ENCODE measurements at regions of chr6 and their contacts with region 1.

Region 1: GRCh38 chr6:165439928-165440554 is 130.6 kb upstream of the C6orf118 start:
- DNase-seq: no peak
- ATAC-seq: peak in 1 of 2 donors; percentile 38

Region 2: GRCh38 chr6:165729307-165729936 is 289.4 kb after region 1 on chr6:
- intact Hi-C with region 1: loop called in 1 of 2 experiments (anchors 10 kb)
- DNase-seq: no peak
- ATAC-seq: peak in 1 of 2 donors; percentile 43

Region 3: DNA sequence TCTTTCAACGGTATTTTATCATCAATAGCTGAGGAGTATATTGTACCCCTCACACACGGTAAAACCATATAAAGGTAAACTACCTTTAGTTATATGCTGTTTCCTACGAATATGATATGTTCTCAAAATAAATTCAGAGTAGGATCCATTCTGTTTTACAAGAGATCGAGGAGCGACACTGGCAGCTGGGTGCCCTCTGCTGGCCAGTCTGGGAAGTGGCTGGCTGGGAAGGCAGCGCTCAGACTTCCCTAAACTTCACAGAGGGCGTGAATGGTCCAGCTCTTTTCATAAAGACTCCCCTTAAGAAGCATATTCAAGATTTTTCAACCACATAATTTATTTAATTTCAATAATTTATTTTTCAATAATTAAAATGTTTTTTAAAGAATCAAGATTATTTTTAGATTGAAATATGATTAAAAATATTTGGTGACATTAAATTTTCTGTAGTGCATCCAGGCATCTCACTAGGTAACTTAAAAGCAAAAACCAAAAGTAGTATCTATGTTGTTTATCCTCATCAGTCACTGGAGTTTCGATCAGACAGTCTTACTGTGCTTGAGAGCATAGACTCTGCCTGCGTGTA is 410.5 kb after region 1 on chr6:
- intact Hi-C with region 1: loop called (anchors 2 to 5 kb)
- DNase-seq: peak; percentile 73
- ATAC-seq: peak; percentile 70 to 71

Region 4: GRCh38 chr6:166112580-166112979 is 672.5 kb after region 1 on chr6:
- intact Hi-C with region 1: loop called in 1 of 2 experiments (anchors 10 kb)
- DNase-seq: no peak
- ATAC-seq: peak in 1 of 2 donors; percentile 75

Measured in left cardiac atrium (tissue), 4 donors.